Right ventricle myocardium inferior (tissue), 1 donor: ENCODE measurements at regions of chr17 and their contacts with region 1.

Region 1: GRCh38 chr17:68909066-68909465 is 46.1 kb downstream of the ABCA8 start:
- DNase-seq: no peak
- ATAC-seq: peak; percentile 68

Region 2: GRCh38 chr17:68777243-68777855 is 131.7 kb before region 1 on chr17:
- intact Hi-C with region 1: loop called (anchors 5 kb)
- DNase-seq: no peak
- ATAC-seq: peak; percentile 79

Region 3: GRCh38 chr17:68794636-68795434 is 114.2 kb before region 1 on chr17:
- intact Hi-C with region 1: loop called (anchors 5 kb)
- DNase-seq: peak; percentile 69
- ATAC-seq: peak; percentile 75

Region 4: DNA sequence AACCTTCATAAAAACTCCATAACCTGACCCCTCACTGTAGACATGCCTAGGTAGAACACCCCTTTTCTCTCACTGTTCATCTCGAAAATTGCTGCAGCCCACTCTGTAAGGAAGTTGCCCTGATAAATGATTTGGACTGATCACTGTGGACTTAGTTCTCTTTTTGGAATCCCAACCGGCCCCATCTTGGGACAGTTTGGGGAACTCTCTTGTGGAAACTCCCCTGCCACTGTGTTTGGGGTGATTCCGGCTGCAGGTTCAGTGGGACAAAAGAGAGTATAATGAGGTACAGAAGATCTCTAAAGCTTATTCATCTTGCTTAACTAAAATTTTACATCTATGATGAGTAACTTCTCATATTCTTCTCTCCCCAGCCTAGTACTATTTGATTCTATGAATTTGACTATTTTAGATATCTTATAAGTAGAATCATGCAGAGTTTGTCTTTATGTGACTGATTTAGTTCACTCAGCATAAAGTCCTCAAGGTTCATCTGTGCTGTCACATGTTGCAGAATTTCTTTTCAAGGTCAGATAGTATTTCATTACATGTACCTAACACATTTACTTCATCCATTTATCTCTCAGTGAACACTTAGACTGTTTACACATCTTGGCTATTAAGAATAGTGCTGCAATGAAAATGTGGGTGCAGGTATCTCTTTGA is 38.8 kb before region 1 on chr17:
- intact Hi-C with region 1: loop called (anchors 5 kb)
- DNase-seq: no peak
- ATAC-seq: peak; percentile 12

Region 5: GRCh38 chr17:68954863-68955841 is 46.1 kb after region 1 on chr17 and contains the start of gene ABCA8:
- intact Hi-C with region 1: loop called (anchors 10 kb)
- DNase-seq: no peak
- ATAC-seq: peak; percentile 80
- total RNA-seq, gene ABCA8: 60.3 TPM

Region 6: DNA sequence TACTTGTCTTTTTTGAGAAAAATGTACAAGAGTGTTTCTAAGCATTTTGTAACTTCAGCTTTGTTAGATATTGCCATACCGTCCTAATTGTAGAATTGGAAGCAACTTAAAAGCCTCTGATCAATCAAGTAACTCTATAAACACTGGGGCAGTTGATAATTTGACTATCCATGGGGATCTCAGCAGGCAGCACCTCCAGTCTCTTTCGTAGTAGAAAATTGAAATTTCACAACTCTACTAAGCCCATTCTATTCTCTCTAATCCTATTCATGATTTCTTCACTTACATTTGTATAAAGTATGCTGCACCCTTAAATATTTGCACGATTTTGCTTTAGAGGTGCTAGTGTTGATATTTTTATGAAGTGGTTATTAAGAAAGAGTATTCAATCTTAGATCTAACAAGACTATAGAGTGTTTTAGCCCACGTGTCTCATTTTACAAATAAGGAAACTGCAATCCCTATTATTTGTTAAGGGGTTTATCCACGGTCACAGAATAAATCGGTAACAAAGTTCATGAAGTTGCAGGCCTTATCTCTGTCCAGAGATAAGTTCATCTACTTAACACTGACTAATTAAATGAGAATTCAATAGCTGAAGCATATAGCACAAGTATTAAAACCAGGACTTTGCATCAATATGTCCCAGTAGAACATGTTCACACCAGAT is 221.7 kb after region 1 on chr17:
- intact Hi-C with region 1: no loop called
- DNase-seq: no peak
- ATAC-seq: no peak